Body of pancreas (tissue), 4 donors: ENCODE measurements at regions of chr11 and their contacts with region 1.

Region 1: DNA sequence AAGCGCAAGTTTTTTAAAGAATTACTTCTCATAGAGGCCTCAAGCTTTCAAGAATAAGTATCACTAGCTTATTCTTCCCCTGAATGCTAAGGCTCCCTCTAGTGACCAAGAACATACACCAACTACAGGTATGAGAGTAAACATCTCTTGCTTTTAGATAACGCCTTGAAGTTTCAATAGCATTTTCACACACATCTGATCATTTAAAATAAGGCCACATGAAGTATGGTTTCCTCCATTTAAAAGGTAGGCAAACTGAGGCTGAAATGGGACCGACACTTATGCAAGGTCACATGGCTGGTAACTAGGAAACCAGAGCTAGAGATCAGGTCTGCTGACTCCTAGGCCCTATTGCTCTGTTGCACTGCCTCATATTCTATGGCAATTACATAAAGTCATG is 66.5 kb downstream of the CCDC34 start:
- DNase-seq: peak in 2 of 4 donors; percentile 20 to 55
- ATAC-seq: peak; percentile 85
- H3K4me3 ChIP-seq: no peak overlapping the region
- H3K27ac ChIP-seq: peak overlapping the region in 1 of 4 donors; percentile 36
- H3K4me1 ChIP-seq: peaks cover 20% of the 10 kb centered on the region
- H3K27me3 ChIP-seq: no peaks in the 10 kb centered on the region
- CTCF ChIP-seq: peak; percentile 48 to 85 (median 74)
- POLR2A ChIP-seq: no peak

Region 2: GRCh38 chr11:27183672-27184457 is 112.6 kb before region 1 on chr11:
- intact Hi-C with region 1: loop called (anchors 5 kb)
- DNase-seq: peak; percentile 69 to 74 (median 72)
- ATAC-seq: peak; percentile 67
- H3K4me3 ChIP-seq: no peak overlapping the region
- H3K27ac ChIP-seq: no peak overlapping the region
- H3K4me1 ChIP-seq: peaks cover 24% of the 10 kb centered on the region
- H3K27me3 ChIP-seq: no peaks in the 10 kb centered on the region
- CTCF ChIP-seq: peak; percentile 48 to 91 (median 85)
- POLR2A ChIP-seq: no peak